H1 (cell line): ENCODE measurements at regions of chr16 and their contacts with region 1.

Region 1: DNA sequence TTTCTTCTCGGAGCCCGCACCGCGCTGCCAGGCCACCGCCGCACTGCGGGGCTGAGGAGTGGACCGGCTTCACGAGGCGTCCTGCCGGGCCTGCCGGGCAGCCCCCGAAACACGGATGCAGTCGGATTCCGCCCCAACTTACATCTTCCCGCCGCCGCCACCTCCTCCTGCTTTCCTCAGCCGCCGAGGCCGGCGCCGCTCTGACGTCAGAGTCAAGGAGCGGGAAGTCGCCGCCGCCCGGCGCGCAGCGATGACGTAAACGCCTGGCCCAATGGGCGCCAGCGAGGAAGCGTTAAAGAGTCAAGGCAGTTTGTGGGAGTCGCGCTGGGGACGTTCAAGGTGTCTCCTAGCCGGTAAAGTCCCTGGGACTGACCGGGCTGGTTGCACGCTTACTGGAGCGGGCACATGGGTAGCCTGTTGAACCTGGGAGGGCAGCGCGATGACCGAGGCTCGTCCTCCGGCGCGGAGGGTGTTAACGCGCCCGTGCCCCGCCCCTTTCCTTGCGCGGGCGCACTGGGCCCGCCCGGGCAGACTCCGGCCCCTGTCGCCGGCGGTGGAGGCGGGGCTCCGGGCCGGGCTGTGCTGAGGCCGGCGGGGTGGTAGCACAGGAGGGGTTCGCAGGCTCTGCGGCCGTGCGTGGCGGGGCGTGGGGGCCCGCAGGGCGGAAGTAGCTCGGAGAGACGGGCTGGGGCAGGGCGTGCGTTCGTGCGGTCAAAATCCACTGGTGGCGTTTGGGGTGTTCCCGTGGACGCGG is at the start of gene RNPS1:
- DNase-seq: peak; percentile 77 to 99
- H3K4me3 ChIP-seq: peak within 1 kb of the TSS; percentile 65 to 99 (median 94)
- H3K27ac ChIP-seq: peak within 1 kb of the TSS; percentile 99
- H3K4me1 ChIP-seq: peaks cover 0 to 8% (median 3%) of the 10 kb centered on the region in 4 experiments; a peak in 3 of 7 replicates
- H3K27me3 ChIP-seq: no peaks in the 10 kb centered on the region
- CTCF ChIP-seq: no peak
- EP300 ChIP-seq: no peak
- POLR2A ChIP-seq: peak; percentile 97 to 98
- RAD21 ChIP-seq: no peak
- total RNA-seq, gene RNPS1: 330 and 357 TPM in 2 replicates

Region 2: DNA sequence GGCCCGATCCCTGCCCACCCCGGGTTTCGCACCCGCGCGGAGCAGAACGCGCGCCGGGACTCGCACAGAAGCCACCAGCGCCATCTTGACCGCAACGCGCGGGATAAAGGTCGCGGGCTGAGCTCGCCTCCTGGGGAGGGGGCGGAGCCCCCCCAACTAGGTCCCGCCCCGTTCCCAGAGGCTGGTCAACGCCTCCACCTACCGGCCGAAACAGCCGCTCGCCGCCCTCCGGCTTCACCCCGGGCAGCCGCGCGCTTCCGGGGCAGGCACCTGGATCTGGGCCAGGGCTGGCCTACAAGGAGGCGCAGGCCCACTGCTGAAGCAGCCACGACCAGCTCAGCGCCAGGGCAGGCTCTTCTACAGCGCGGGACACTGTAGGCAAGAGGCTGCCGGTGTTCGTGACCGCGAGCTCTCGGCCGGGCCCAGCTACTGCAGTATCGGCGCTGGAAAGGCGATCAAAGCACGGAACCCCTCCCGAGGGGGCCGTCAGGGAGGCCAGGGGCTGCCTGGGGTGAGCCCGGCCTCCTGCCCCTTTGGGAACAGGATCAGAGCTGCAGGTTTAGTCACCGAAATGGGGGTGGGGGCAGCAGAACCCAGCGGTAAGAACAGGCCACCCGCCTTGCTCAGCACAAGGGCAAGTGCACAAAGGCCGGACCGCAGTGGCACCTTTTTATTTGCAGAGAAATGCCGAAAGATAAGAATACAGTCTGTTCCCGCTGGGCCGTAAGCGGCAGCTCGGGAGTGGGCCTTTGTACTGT is 16.4 kb before region 1 on chr16 and contains the start of gene ECI1:
- CTCF ChIA-PET with region 1: interaction called, 13 read pairs
- POLR2A ChIA-PET with region 1: interaction called, 228 read pairs
- DNase-seq: peak; percentile 84 to 96
- H3K4me3 ChIP-seq: peak within 1 kb of the TSS; percentile 76 to 95 (median 83)
- H3K27ac ChIP-seq: peak within 1 kb of the TSS; percentile 86
- H3K4me1 ChIP-seq: peaks cover 4 to 6% (median 5%) of the 10 kb centered on the region in 4 experiments; a peak in 6 of 7 replicates
- H3K27me3 ChIP-seq: no peaks in the 10 kb centered on the region
- CTCF ChIP-seq: peak; percentile 61 to 63 (median 63)
- EP300 ChIP-seq: peak in 1 of 2 experiments; percentile 77; a peak in 1 of 3 replicates
- POLR2A ChIP-seq: peak; percentile 89 to 90
- RAD21 ChIP-seq: peak; percentile 62 to 71; a peak in 3 of 4 replicates
- total RNA-seq, gene ECI1: 79.5 and 80.0 TPM in 2 replicates

Region 3: GRCh38 chr16:2278272-2278608 is 10.2 kb after region 1 on chr16:
- CTCF ChIA-PET with region 1: interaction called, 8 read pairs
- POLR2A ChIA-PET with region 1: interaction called, 29 read pairs
- DNase-seq: no peak
- H3K4me3 ChIP-seq: no peak overlapping the region
- H3K27ac ChIP-seq: no peak overlapping the region
- H3K4me1 ChIP-seq: no peaks in the 10 kb centered on the region; a peak in 1 of 7 replicates
- H3K27me3 ChIP-seq: no peaks in the 10 kb centered on the region
- CTCF ChIP-seq: peak; percentile 53 to 66 (median 54)
- EP300 ChIP-seq: no peak
- POLR2A ChIP-seq: no peak
- RAD21 ChIP-seq: peak; percentile 38 to 48

Region 4: DNA sequence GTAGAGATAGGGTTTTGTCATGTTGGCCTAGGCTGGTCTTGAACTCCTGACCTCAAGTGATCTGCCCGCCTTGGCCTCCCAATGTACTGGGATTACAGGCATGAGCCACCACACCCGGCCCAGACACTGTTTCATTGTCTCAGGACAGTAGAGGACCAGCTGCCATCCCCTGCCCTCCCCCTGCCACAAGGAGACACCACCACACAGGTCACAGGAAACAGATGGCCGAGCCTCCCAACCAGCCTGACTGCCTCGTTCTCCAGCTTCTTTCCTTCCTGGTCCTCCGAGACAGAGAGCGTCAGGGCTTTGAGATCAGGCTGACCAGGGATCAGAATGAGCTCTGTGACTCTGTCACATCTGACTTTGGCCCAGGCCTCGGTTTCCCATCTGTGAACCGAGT is 20.6 kb after region 1 on chr16:
- CTCF ChIA-PET with region 1: no interaction called
- POLR2A ChIA-PET with region 1: interaction called, 28 read pairs
- DNase-seq: no peak
- H3K4me3 ChIP-seq: no peak overlapping the region
- H3K27ac ChIP-seq: no peak overlapping the region
- H3K4me1 ChIP-seq: no peaks in the 10 kb centered on the region; a peak in 1 of 7 replicates
- H3K27me3 ChIP-seq: no peaks in the 10 kb centered on the region
- CTCF ChIP-seq: no peak
- EP300 ChIP-seq: no peak
- POLR2A ChIP-seq: no peak
- RAD21 ChIP-seq: no peak